Activated B cell treated with CpG ODN at 0.5 μM for 24 hours (primary cell): ENCODE measurements at regions of chr10 and their contacts with region 1.

Region 1: GRCh38 chr10:12129222-12130111 is at the start of gene SEC61A2:
- DNase-seq: peak; percentile 100
- ATAC-seq: peak; percentile 89
- H3K4me3 Mint-ChIP-seq: peak within 1 kb of the TSS; percentile 90
- H3K27ac Mint-ChIP-seq: peak within 1 kb of the TSS; percentile 88
- H3K4me1 Mint-ChIP-seq: peaks cover 15% of the 10 kb centered on the region
- H3K27me3 Mint-ChIP-seq: no peaks in the 10 kb centered on the region
- CTCF ChIP-seq: no peak
- total RNA-seq, gene SEC61A2: 13.3 and 20.8 TPM in 2 replicates

Region 2: GRCh38 chr10:11678074-11678793 is 451.2 kb before region 1 on chr10:
- CTCF ChIA-PET with region 1: no interaction called
- POLR2A ChIA-PET with region 1: no interaction called
- intact Hi-C with region 1: no loop called
- DNase-seq: peak; percentile 51
- ATAC-seq: peak; percentile 80
- H3K4me3 Mint-ChIP-seq: peak overlapping the region; percentile 77
- H3K27ac Mint-ChIP-seq: peak overlapping the region; percentile 94
- H3K4me1 Mint-ChIP-seq: peaks cover 94% of the 10 kb centered on the region
- H3K27me3 Mint-ChIP-seq: no peaks in the 10 kb centered on the region
- CTCF ChIP-seq: no peak

Region 3: DNA sequence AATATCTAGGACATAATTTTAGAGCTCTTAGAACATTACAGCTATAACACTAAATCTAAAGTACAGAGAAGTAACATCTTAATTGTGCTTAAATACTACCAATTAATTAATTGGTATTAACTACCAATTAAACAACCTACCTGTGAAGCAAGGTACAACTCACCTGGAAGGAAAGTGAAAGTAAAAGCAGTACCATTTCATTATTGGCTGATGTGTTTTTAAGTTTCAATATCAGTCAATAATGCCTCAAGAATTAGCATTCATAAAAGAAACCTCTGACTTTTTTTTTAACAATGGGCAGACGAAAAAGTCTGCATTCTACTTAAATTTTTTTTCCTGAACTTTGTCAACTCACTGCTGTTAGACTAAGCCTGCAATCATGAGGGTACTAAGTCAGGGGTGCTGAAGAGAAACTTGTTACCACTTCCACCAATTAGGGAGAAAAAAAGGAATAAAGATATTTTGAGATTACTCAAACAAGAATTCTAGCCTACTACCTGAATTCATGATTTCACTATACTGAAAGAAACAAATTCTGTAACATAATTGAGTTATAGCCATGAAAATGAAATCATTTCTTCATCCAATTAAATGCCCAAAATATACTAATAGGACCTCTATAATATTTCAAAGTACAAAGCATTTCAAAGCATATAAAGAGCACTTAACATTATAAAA is 106.7 kb before region 1 on chr10:
- CTCF ChIA-PET with region 1: no interaction called
- POLR2A ChIA-PET with region 1: no interaction called
- intact Hi-C with region 1: loop called (anchors 5 kb)
- DNase-seq: no peak
- ATAC-seq: peak; percentile 40
- H3K4me3 Mint-ChIP-seq: peak overlapping the region; percentile 28
- H3K27ac Mint-ChIP-seq: peak overlapping the region; percentile 78
- H3K4me1 Mint-ChIP-seq: peaks cover 40% of the 10 kb centered on the region
- H3K27me3 Mint-ChIP-seq: no peaks in the 10 kb centered on the region
- CTCF ChIP-seq: no peak

Region 4: DNA sequence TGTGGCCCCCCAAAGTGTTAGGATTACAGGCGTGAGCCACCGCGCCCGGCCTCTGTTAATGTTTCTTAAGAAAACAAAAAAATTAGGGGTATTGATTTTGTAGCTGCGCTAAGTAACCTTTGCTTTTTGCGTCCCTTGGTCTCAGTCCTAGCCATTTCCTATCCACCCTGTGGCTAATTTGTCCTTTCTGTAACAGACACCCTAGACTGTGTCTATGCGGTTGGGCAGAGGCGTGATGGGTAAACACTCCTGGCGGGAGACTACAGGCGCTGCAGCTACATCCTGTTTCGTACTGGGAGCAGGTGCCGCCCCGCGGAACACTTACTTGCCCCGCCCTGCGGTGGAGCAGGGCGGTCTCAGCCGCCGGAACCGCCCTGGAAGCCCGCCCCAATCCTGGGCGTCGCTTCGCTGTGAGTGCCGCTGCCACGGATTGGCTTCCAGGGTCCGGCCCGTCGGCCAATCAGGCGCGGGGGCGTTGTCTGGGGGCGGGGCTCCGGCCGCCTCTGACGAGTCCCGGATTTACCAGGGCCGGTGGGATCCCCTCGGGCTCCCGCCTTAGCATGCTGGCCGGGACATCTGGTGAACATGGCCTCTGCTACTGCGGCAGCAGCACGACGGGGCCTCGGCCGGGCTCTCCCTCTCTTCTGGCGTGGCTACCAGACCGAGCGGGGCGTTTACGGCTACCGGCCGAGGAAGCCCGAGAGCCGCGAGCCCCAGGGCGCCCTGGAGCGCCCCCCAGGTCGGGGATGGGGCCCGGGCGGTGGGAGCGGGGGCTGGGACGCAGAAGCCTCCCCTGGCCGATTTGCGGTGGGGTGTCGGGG is 60.8 kb before region 1 on chr10 and contains the start of gene DHTKD1:
- CTCF ChIA-PET with region 1: no interaction called
- POLR2A ChIA-PET with region 1: interaction called, 12 read pairs
- intact Hi-C with region 1: loop called (anchors 1 kb)
- DNase-seq: peak; percentile 99
- ATAC-seq: peak; percentile 96
- H3K4me3 Mint-ChIP-seq: peak within 1 kb of the TSS; percentile 87
- H3K27ac Mint-ChIP-seq: peak within 1 kb of the TSS; percentile 90
- H3K4me1 Mint-ChIP-seq: peaks cover 44% of the 10 kb centered on the region
- H3K27me3 Mint-ChIP-seq: no peaks in the 10 kb centered on the region
- CTCF ChIP-seq: no peak
- total RNA-seq, gene DHTKD1: 58.2 and 60.7 TPM in 2 replicates

Region 5: GRCh38 chr10:12077580-12078180 is 51.8 kb before region 1 on chr10:
- CTCF ChIA-PET with region 1: no interaction called
- POLR2A ChIA-PET with region 1: interaction called, 10 read pairs
- intact Hi-C with region 1: loop called (anchors 1 kb)
- DNase-seq: peak; percentile 36
- ATAC-seq: peak; percentile 71
- H3K4me3 Mint-ChIP-seq: peak overlapping the region; percentile 47
- H3K27ac Mint-ChIP-seq: peak overlapping the region; percentile 98
- H3K4me1 Mint-ChIP-seq: peaks cover 70% of the 10 kb centered on the region
- H3K27me3 Mint-ChIP-seq: no peaks in the 10 kb centered on the region
- CTCF ChIP-seq: no peak

Region 6: DNA sequence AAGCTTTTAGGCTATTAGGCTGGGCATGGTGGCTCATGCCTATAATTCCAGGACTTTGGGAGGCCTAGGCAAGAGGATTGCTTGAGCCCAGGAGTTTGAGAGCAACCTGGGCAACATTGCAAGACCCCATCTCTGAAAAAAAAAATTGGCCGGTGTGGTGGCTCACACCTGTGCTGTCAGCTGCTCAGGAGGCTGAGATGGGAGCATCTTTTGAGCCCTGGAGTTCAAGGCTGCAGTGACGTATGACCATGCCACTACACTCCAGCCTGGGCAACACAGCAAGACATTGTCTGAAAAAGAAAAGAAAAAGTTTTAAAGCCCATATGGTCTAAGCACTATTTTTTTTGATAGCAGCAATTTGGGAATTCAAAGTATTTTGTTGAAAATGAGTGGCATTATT is 15.8 kb before region 1 on chr10:
- CTCF ChIA-PET with region 1: no interaction called
- POLR2A ChIA-PET with region 1: interaction called, 4 read pairs
- intact Hi-C with region 1: loop called (anchors 2 kb)
- DNase-seq: no peak
- ATAC-seq: no peak
- H3K4me3 Mint-ChIP-seq: no peak overlapping the region
- H3K27ac Mint-ChIP-seq: no peak overlapping the region
- H3K4me1 Mint-ChIP-seq: peaks cover 20% of the 10 kb centered on the region
- H3K27me3 Mint-ChIP-seq: no peaks in the 10 kb centered on the region
- CTCF ChIP-seq: no peak

Region 7: GRCh38 chr10:12902135-12902572 is 772.7 kb after region 1 on chr10:
- CTCF ChIA-PET with region 1: no interaction called
- POLR2A ChIA-PET with region 1: no interaction called
- intact Hi-C with region 1: loop called (anchors 2 kb)
- DNase-seq: peak; percentile 18
- ATAC-seq: no peak
- H3K4me3 Mint-ChIP-seq: no peak overlapping the region
- H3K27ac Mint-ChIP-seq: no peak overlapping the region
- H3K4me1 Mint-ChIP-seq: no peaks in the 10 kb centered on the region
- H3K27me3 Mint-ChIP-seq: peaks cover 23% of the 10 kb centered on the region
- CTCF ChIP-seq: peak; percentile 82